Right ventricle myocardium inferior (tissue), 1 donor: ENCODE measurements at regions of chr16 and their contacts with region 1.

Region 1: DNA sequence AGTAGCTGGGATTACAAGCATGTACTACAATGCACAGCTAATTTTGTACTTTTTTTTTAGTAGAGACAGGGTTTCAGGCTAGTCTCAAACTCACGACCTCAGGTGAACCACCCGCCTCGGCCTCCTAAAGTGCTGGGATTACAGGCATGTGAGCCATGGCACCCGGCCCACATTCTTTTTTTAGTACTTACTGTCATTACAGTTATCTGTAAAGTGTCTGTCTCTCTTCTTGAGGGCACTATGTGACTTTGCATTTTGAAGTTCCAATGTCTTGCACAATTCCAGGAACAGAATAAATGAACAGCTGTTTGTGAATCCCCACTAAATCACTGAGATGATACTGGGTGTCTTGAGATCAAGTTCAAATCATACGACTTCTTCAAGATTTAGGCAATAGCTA is 1540.3 kb downstream of the CDH11 start:
- DNase-seq: peak; percentile 62
- ATAC-seq: peak; percentile 92

Region 2: GRCh38 chr16:63361032-63361624 is 220.4 kb before region 1 on chr16:
- intact Hi-C with region 1: no loop called
- DNase-seq: no peak
- ATAC-seq: no peak

Region 3: DNA sequence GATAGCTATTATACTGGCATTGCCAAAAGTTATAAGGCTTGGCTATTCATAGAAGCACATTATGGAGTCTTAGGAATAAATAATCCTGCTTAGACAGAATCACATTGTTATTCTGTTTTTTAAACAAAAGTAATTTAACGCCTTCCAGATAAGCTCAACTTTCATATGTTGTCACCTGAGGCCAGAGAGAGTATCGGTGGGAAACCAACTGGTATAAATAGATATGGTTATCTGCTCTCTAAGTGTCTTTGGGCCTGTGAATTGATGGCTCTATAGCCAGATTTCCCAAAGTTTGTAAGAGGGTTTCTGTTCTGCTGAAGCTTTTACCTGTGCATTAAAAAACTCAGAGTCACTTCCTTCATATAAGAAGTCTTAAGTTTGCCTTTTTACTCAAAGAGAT is 90.9 kb after region 1 on chr16:
- intact Hi-C with region 1: no loop called
- DNase-seq: no peak
- ATAC-seq: no peak

Region 4: GRCh38 chr16:63684149-63685101 is 102.9 kb after region 1 on chr16:
- intact Hi-C with region 1: loop called (anchors 10 kb)
- DNase-seq: no peak
- ATAC-seq: no peak